ENCODE measurements at regions of chr7 and their contacts with region 1.

Region 1: GRCh38 chr7:102464577-102465280 is at the starts of genes ALKBH4 and LRWD1:
- DNase-seq: peak; percentile 99
- ATAC-seq: peak; percentile 95
- total RNA-seq, gene ALKBH4: 5.8 TPM
- total RNA-seq, gene LRWD1: 10.0 TPM

Region 2: GRCh38 chr7:102412548-102412947 is 52.2 kb before region 1 on chr7:
- intact Hi-C with region 1: loop called (anchors 5 kb)
- DNase-seq: peak; percentile 73
- ATAC-seq: peak; percentile 82

Measured in Right ventricle myocardium inferior (tissue), 1 donor.